ENCODE measurements at regions of chr11 and their contacts with region 1.

Region 1: DNA sequence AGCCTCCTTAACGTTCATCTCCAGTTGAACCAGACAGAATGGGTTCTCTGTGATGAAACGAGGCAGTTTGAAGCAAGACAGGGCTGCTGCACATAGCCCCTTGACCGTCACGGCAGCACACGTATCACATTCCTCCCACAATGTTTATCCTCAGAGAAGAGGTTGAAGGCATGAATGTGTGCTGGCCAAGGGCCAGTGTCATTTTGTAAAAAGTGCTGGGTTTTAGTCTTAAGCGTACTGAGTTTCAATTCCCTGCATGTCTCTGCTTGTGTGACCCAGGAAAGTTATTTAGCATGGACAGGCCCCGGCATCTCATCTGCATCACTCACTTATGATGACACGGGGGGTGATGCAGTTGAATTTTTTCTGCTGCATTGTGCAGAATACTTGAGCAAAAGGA is 31.6 kb downstream of the TTC12 start:
- DNase-seq: no peak
- ATAC-seq: no peak
- H3K4me3 ChIP-seq: no peak overlapping the region
- H3K27ac ChIP-seq: no peak overlapping the region
- H3K4me1 ChIP-seq: no peaks in the 10 kb centered on the region
- H3K27me3 ChIP-seq: no peaks in the 10 kb centered on the region
- CTCF ChIP-seq: no peak
- EP300 ChIP-seq: no peak
- POLR2A ChIP-seq: no peak
- RAD21 ChIP-seq: no peak

Region 2: GRCh38 chr11:113334183-113334582 is 11.8 kb before region 1 on chr11:
- CTCF ChIA-PET with region 1: no interaction called
- POLR2A ChIA-PET with region 1: no interaction called
- in situ Hi-C with region 1: no loop called
- intact Hi-C with region 1: no loop called
- DNase-seq: no peak
- ATAC-seq: no peak
- H3K4me3 ChIP-seq: no peak overlapping the region
- H3K27ac ChIP-seq: no peak overlapping the region
- H3K4me1 ChIP-seq: no peaks in the 10 kb centered on the region
- H3K27me3 ChIP-seq: no peaks in the 10 kb centered on the region
- CTCF ChIP-seq: no peak
- EP300 ChIP-seq: no peak
- POLR2A ChIP-seq: no peak
- RAD21 ChIP-seq: no peak

Region 3: GRCh38 chr11:113401716-113402115 is 55.7 kb after region 1 on chr11:
- CTCF ChIA-PET with region 1: no interaction called
- POLR2A ChIA-PET with region 1: no interaction called
- in situ Hi-C with region 1: loop called (anchors 10 kb)
- intact Hi-C with region 1: no loop called
- DNase-seq: no peak
- ATAC-seq: no peak
- H3K4me3 ChIP-seq: no peak overlapping the region
- H3K27ac ChIP-seq: no peak overlapping the region
- H3K4me1 ChIP-seq: no peaks in the 10 kb centered on the region
- H3K27me3 ChIP-seq: peaks cover 8 to 21% of the 10 kb centered on the region in 2 experiments; a peak in 2 of 5 replicates
- CTCF ChIP-seq: no peak
- EP300 ChIP-seq: no peak
- POLR2A ChIP-seq: no peak
- RAD21 ChIP-seq: no peak

Region 4: DNA sequence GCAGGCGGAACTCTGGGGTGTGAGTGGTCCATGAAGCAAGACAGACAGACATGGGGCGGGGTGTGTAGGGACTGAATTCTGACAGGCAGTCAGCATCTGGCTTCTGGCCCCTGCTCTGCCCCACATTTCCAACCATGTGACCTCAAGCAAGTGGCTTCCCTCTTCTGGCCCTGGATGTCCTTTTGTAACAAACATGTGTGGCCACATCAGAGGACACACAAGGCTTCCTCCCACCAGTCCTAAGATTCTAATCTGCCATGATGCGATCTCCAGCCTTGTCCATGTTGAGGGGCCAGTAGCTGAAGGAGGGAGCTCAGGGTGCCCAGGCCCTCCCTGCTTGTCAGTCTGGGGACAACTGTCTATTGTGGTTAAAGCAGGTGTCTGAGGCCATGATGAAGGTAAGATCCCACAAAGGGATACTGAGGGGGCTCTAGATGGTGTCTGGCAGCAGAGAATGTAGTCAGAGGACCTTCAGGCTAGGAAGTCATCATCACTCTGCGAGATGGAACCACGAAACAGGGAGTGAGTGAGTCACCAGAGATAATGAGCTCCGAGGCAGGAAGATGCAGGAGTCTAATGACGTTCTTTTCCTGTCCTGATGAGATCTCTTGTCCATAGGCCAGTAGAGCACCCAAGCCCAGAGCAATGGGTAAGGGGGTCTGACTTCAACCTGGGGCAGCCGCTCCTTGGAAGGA is 101.8 kb after region 1 on chr11:
- CTCF ChIA-PET with region 1: no interaction called
- POLR2A ChIA-PET with region 1: no interaction called
- in situ Hi-C with region 1: no loop called
- intact Hi-C with region 1: no loop called
- DNase-seq: no peak
- ATAC-seq: no peak
- H3K4me3 ChIP-seq: no peak overlapping the region
- H3K27ac ChIP-seq: no peak overlapping the region
- H3K4me1 ChIP-seq: no peaks in the 10 kb centered on the region
- H3K27me3 ChIP-seq: peaks cover 4 to 33% of the 10 kb centered on the region in 2 experiments; a peak in 4 of 5 replicates
- CTCF ChIP-seq: no peak
- EP300 ChIP-seq: no peak
- POLR2A ChIP-seq: no peak
- RAD21 ChIP-seq: no peak